Activated CD4-positive, alpha-beta memory T cell treated with anti-CD3 and anti-CD28 coated beads, Interleukin-2, amount 10 ng/mL, durations not matched to agents 7 days and 5 days (primary cell): ENCODE measurements at regions of chr2 and their contacts with region 1.

Region 1: GRCh38 chr2:112542123-112542983 is at the start of gene POLR1B:
- DNase-seq: peak; percentile 80
- H3K4me3 Mint-ChIP-seq: no peak within 1 kb of the TSS
- H3K27ac Mint-ChIP-seq: no peak within 1 kb of the TSS
- H3K4me1 Mint-ChIP-seq: peaks cover 27% of the 10 kb centered on the region
- H3K27me3 Mint-ChIP-seq: no peaks in the 10 kb centered on the region
- total RNA-seq, gene POLR1B: 23.5 to 29.0 TPM

Region 2: GRCh38 chr2:112449854-112450253 is 92.5 kb before region 1 on chr2:
- CTCF ChIA-PET with region 1: no interaction called
- POLR2A ChIA-PET with region 1: no interaction called
- DNase-seq: no peak
- H3K4me3 Mint-ChIP-seq: no peak overlapping the region
- H3K27ac Mint-ChIP-seq: no peak overlapping the region
- H3K4me1 Mint-ChIP-seq: no peaks in the 10 kb centered on the region
- H3K27me3 Mint-ChIP-seq: peaks cover 4% of the 10 kb centered on the region

Region 3: GRCh38 chr2:112584134-112584890 is 42.0 kb after region 1 on chr2 and contains the start of gene CHCHD5:
- CTCF ChIA-PET with region 1: interaction called, 4 read pairs
- POLR2A ChIA-PET with region 1: interaction called, 16 read pairs
- DNase-seq: peak; percentile 97
- H3K4me3 Mint-ChIP-seq: peak within 1 kb of the TSS; percentile 97
- H3K27ac Mint-ChIP-seq: peak within 1 kb of the TSS; percentile 95
- H3K4me1 Mint-ChIP-seq: peaks cover 47% of the 10 kb centered on the region
- H3K27me3 Mint-ChIP-seq: no peaks in the 10 kb centered on the region
- total RNA-seq, gene CHCHD5: 40.0 to 47.5 TPM

Region 4: DNA sequence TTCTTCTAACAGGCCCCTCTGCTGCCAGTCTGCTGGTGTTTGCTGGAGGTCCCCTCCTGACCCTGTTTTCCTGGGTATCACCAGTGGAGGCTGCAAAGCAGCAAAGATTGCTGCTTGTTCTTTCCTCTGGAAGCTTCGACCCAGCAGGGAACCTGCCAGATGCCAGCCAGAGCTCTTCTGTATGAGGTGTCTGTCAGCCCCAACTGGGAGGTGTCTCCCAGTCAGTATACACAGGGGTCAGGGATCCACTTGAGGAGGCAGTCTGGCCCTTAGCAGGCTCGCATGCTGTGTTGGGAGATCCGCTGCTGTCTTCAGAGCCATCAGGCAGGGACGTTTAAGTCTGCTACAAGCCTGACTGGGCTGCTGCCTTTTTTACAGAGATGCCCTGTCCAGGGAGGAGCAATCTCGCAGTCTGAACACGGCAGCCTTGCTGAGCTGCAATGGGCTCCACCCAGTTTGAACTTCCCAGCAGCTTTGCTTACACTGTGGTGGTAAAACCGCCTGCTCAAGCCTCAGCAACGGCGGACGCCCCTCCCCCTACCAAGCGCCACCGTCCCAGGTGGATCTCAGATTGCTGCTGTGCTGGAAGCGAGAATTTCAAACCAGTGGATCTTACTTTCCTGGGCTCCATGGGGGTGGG is 72.0 kb after region 1 on chr2:
- CTCF ChIA-PET with region 1: no interaction called
- POLR2A ChIA-PET with region 1: no interaction called
- DNase-seq: no peak
- H3K4me3 Mint-ChIP-seq: no peak overlapping the region
- H3K27ac Mint-ChIP-seq: no peak overlapping the region
- H3K4me1 Mint-ChIP-seq: no peaks in the 10 kb centered on the region
- H3K27me3 Mint-ChIP-seq: peaks cover 38% of the 10 kb centered on the region

Region 5: DNA sequence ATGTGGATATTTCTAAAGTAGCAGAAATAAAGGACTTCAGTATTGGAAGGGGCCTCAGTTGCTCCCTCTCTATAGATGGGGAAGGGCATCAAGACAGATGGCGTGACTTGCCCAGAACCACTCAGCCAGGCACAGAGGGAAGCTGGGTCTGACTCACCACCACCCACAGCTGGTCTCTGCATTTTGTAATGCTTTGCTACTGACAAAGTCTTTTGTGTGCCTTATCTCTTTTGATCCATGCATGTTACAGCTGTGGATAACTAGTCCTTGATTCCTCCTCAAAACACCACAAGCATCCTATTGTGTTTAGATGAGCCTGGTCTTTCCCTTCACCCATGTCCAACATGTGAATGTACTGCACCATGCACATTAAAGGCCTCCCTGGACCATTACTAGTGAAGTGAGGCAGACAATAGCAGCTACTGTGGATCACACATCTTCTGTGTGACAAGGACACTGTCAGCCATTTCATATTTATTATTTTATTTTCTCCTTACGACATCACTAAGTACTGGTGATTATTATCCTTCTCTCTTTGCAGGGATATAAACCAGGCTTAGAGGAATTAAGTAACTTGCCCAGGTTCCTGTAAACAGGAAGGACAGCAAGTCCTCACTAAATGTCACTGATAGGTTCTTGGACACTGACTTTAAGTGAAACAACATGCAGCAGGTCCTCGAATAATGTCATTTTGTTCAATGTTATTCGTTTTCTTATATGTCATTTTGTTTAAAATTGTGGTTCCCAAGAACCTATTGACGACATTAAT is 339.0 kb after region 1 on chr2:
- CTCF ChIA-PET with region 1: no interaction called
- POLR2A ChIA-PET with region 1: no interaction called
- DNase-seq: peak; percentile 57
- H3K4me3 Mint-ChIP-seq: no peak overlapping the region
- H3K27ac Mint-ChIP-seq: peak overlapping the region; percentile 61
- H3K4me1 Mint-ChIP-seq: peaks cover 57% of the 10 kb centered on the region
- H3K27me3 Mint-ChIP-seq: no peaks in the 10 kb centered on the region